HepG2 (cell line): ENCODE measurements at regions of chr11 and their contacts with region 1.

Region 1: GRCh38 chr11:15258433-15259165 is 143.9 kb downstream of the INSC start:
- DNase-seq: peak; percentile 62
- ATAC-seq: peak; percentile 92
- H3K4me3 ChIP-seq: no peak overlapping the region
- H3K27ac ChIP-seq: no peak overlapping the region
- H3K4me1 ChIP-seq: no peaks in the 10 kb centered on the region
- H3K27me3 ChIP-seq: no peaks in the 10 kb centered on the region
- CTCF ChIP-seq: peak; percentile 26; the same call in 1 of the 2 replicates
- EP300 ChIP-seq: no peak
- POLR2A ChIP-seq: no peak
- RAD21 ChIP-seq: no peak

Region 2: GRCh38 chr11:15213471-15214231 is 44.9 kb before region 1 on chr11:
- CTCF ChIA-PET with region 1: no interaction called
- POLR2A ChIA-PET with region 1: no interaction called
- in situ Hi-C with region 1: no loop called
- intact Hi-C with region 1: loop called (anchors 1 kb)
- DNase-seq: peak; percentile 52
- ATAC-seq: peak; percentile 87
- H3K4me3 ChIP-seq: no peak overlapping the region
- H3K27ac ChIP-seq: no peak overlapping the region
- H3K4me1 ChIP-seq: peaks cover 15% of the 10 kb centered on the region
- H3K27me3 ChIP-seq: no peaks in the 10 kb centered on the region
- CTCF ChIP-seq: no peak
- EP300 ChIP-seq: no peak
- POLR2A ChIP-seq: no peak
- RAD21 ChIP-seq: no peak